MCF 10A (cell line): ENCODE measurements at regions of chr3 and their contacts with region 1.

Region 1: DNA sequence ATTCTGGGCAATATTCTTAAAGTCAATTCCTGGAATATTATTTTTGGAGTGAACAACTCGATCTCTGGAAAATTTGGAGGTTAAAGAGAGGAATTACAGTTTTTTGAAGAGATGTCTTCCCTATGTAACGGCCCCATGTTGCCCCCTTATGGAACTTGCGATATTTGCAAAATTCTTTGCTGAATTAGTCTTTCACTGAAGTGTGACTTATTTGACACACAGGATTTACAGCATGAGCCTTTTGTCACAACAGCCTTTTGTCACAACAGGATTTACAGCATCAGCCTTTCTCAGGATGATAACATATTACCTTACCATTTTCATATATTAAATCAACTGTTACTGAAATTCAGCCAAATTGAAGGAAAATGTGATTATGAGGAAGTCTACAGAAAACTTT is 37.8 kb upstream of the SPTSSB start:
- DNase-seq: peak; percentile 76
- H3K4me3 Mint-ChIP-seq: no peak overlapping the region
- H3K27ac Mint-ChIP-seq: no peak overlapping the region
- H3K4me1 Mint-ChIP-seq: peaks cover 16% of the 10 kb centered on the region
- H3K27me3 Mint-ChIP-seq: no peaks in the 10 kb centered on the region
- CTCF ChIP-seq: peak; percentile 69

Region 2: DNA sequence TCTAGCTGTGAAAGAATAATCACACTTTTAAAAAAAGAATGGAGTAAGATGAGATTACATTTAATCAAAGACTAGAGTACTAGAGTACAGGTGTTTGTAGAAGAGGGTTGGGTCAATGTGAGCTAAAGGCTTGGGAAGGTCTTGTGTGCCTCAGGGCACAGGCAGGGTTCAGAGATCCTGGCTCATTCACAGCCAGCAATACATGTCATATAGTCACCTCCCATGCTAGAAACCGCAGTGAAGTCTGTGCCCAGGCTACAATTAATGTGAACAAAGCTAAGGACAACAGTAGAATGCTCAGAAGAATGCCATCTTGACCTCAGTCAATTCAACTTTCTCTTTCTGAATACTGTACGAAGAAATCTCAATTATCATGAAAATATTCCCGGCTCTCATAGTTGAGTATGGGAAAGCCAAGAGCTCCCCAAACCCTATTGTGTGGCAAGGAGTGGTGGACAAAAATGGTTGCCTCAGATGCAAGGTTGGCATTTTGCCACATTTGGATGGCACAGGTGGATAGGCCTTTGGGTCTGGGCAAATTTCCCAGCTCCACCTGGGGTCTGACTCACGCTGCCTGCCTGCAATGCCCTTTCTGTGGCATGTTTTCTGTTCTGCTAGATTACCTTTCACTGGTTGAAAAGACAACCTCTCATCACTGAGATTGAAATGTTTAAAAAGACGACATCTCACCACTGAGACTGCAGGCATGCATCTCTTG is 117.7 kb before region 1 on chr3:
- CTCF ChIA-PET with region 1: interaction called, 16 read pairs
- POLR2A ChIA-PET with region 1: interaction called, 4 read pairs
- intact Hi-C with region 1: no loop called
- DNase-seq: peak; percentile 97
- H3K4me3 Mint-ChIP-seq: peak overlapping the region; percentile 29
- H3K27ac Mint-ChIP-seq: peak overlapping the region; percentile 44
- H3K4me1 Mint-ChIP-seq: peaks cover 14% of the 10 kb centered on the region
- H3K27me3 Mint-ChIP-seq: no peaks in the 10 kb centered on the region
- CTCF ChIP-seq: no peak

Region 3: GRCh38 chr3:161305095-161305991 is 103.7 kb before region 1 on chr3:
- CTCF ChIA-PET with region 1: interaction called, 20 read pairs
- POLR2A ChIA-PET with region 1: no interaction called
- intact Hi-C with region 1: loop called (anchors 1 kb)
- DNase-seq: peak; percentile 42
- H3K4me3 Mint-ChIP-seq: no peak overlapping the region
- H3K27ac Mint-ChIP-seq: no peak overlapping the region
- H3K4me1 Mint-ChIP-seq: no peaks in the 10 kb centered on the region
- H3K27me3 Mint-ChIP-seq: no peaks in the 10 kb centered on the region
- CTCF ChIP-seq: peak; percentile 66

Region 4: DNA sequence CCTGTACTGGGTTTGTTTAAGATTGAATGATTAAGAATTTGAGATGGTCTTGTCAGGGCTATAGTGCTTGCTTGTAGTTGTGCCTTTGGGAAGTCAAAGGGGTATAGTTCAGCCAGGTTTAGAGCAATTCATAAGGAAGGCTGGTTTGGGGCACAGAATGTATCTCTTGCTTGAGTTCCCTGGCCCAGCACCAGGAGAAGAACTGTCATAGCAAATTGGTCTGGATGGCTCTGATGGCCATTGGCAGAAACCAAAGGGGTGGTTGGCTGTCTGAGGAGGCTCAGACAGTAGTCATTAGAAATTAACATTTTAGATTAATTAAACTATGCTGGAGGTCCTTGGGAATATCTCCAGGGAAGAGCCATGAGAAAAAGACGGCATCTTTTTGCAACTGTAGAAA is 62.1 kb after region 1 on chr3:
- CTCF ChIA-PET with region 1: no interaction called
- POLR2A ChIA-PET with region 1: no interaction called
- intact Hi-C with region 1: no loop called
- DNase-seq: no peak
- H3K4me3 Mint-ChIP-seq: no peak overlapping the region
- H3K27ac Mint-ChIP-seq: no peak overlapping the region
- H3K4me1 Mint-ChIP-seq: no peaks in the 10 kb centered on the region
- H3K27me3 Mint-ChIP-seq: no peaks in the 10 kb centered on the region
- CTCF ChIP-seq: no peak